GM13976 (cell line): ENCODE measurements at regions of chr11 and their contacts with region 1.

Region 1: DNA sequence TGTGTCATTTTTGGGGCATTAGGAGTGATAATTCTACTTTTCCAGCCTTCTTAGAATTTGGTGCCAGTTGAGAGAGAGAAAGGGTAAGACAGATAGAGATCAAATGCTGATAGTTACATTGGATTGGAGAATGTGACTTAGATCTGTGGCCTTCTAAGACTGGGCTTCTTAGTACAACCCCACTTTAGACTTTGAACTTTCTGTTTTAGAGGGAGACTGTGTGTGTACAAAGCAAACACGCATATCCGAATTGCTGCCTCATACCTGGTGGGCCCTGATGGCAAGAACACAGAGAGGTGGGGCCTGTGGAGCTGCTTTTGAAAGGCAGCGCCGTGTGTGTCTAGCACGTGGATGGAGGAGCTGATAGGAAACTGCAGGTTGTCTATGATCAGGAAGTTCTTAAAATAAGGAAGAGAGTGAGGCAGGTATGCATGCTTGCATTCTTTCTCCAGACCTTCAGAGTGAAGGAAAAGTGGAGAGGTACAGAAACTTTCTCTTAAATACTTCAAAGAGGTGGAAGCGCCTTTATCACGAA is 13.4 kb downstream of the PDHX start:
- DNase-seq: no peak
- CTCF ChIP-seq: no peak

Region 2: GRCh38 chr11:35257281-35257680 is 327.4 kb after region 1 on chr11:
- in situ Hi-C with region 1: no loop called
- DNase-seq: peak; percentile 69
- CTCF ChIP-seq: no peak

Region 3: DNA sequence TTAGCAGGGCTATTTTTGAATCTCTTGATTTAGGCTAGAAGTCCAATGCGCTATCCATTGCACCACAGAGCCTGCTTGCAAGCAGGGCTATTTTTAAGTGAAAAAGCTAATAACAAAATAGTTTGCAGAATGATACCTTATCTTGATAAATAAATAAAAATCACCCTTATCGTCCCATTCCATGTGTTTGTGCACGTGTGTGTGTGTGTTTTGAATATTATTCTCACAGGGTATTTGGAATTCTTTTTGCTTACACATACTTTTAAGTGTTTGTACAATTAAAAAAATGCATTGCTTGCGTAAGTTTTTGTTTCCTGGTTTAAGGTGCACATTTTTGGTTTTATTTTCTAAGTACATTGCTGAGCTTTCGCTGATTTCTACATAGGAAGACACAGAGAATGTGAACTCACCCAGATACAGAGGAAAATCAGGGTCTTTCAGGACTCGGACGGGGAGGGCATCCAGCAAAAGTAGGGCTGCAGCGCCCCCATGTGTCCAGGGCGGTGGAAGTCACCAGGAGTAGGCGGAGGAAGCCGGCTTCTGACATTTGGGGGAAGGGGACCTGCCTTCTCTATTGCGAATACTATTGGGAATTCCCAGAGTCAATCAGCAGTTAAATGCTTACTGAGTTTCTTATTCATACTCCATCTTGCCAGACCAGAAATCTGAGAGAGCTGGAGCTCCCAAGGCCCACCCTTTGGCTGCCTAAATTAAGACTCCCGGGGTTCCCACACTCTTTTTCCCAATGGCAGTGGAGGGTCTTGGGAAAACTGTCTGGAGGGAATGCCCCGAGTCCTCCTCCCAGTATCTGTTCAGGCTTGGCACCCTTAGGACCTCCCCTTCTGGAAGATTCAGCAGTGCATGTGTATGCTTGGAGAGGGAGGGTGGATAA is 462.3 kb after region 1 on chr11:
- in situ Hi-C with region 1: loop called (anchors 5 kb)
- DNase-seq: peak; percentile 70
- CTCF ChIP-seq: peak; percentile 91